Activated CD4-positive, alpha-beta T cell treated with anti-CD3 and anti-CD28 coated beads, Interleukin-2, amount 10 ng/mL, durations not matched to agents 7 days and 5 days (primary cell): ENCODE measurements at regions of chr5 and their contacts with region 1.

Region 1: DNA sequence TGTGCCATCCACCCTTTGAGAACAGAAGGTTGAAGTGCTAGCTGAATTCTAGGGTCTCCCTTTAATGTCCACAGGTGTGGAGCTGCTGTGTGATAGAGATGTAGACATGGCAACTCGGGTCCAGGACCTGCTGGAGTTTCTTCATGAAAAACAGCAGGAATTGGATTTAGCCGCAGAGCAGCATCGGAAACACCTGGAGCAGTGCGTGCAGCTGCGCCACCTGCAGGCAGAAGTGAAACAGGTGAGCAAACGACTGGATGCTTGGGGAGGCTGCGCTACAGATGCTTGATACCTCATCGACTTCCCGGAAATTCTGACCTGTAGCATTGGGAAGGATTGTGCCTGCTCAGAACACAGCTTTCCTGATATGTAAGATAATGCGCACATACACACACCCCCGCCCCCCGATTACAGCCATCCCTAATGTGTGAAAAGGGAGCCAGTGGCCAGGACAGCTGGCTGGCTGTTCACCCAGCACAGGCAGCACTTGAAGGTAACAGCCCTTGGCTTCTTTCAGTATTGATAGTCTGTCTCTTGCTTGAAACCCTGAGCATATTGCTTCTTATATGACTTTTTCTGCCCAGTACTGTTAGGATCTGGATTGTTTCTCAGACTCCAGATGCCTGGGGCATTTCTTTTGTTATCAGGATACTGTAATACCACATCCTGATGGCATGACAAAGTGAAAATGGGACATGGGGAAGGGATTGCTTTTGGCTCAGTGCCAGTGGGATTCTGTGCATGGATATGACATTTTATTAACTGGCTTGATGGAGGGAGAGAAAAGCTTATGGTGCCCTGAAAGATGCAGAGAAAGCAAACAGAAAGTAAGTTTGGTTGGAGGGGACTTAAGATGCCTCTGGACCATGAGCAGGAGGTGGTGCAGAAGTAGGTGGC is 216.8 kb upstream of the OTULINL start:
- DNase-seq: no peak
- H3K4me3 Mint-ChIP-seq: no peak overlapping the region
- H3K27ac Mint-ChIP-seq: peak overlapping the region; percentile 84
- H3K4me1 Mint-ChIP-seq: peaks cover 51% of the 10 kb centered on the region
- H3K27me3 Mint-ChIP-seq: no peaks in the 10 kb centered on the region

Region 2: GRCh38 chr5:14397717-14398116 is 32.9 kb after region 1 on chr5:
- CTCF ChIA-PET with region 1: interaction called, 4 read pairs
- POLR2A ChIA-PET with region 1: interaction called, 10 read pairs
- DNase-seq: no peak
- H3K4me3 Mint-ChIP-seq: no peak overlapping the region
- H3K27ac Mint-ChIP-seq: no peak overlapping the region
- H3K4me1 Mint-ChIP-seq: peaks cover 46% of the 10 kb centered on the region
- H3K27me3 Mint-ChIP-seq: peaks cover 5% of the 10 kb centered on the region

Region 3: DNA sequence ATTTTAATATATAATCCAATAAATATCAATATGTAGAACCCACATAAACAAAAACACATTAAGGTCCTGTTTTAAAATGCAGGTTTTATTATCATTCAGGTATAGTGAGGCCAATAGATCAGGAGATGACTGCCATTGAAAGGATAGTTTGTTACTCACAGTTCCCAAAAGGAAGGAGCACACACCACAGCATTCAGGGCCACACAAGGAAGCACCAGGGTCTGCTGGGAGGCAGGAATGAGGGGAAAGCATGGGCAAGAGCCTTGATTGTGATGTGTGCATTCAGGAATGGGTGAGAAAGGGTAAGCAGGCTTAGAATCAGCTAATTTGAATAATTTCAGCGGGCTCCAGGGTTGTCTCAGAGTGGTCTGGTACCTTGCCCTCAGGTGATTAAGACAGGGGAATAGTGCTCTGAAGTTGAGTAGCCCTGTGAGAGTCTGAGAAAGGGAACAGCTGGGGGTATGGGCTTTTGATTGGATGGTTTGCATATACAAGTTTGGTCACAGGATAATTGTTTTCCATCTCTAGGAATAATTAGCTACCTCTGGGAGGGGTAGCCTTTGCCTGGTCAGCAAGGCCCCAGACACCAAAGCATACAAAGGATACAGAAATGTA is 279.9 kb after region 1 on chr5:
- CTCF ChIA-PET with region 1: interaction called, 14 read pairs
- POLR2A ChIA-PET with region 1: no interaction called
- DNase-seq: no peak
- H3K4me3 Mint-ChIP-seq: no peak overlapping the region
- H3K27ac Mint-ChIP-seq: no peak overlapping the region
- H3K4me1 Mint-ChIP-seq: peaks cover 11% of the 10 kb centered on the region
- H3K27me3 Mint-ChIP-seq: peaks cover 25% of the 10 kb centered on the region

Region 4: GRCh38 chr5:14650052-14650451 is 285.2 kb after region 1 on chr5:
- CTCF ChIA-PET with region 1: interaction called, 14 read pairs
- POLR2A ChIA-PET with region 1: no interaction called
- DNase-seq: no peak
- H3K4me3 Mint-ChIP-seq: no peak overlapping the region
- H3K27ac Mint-ChIP-seq: no peak overlapping the region
- H3K4me1 Mint-ChIP-seq: peaks cover 17% of the 10 kb centered on the region
- H3K27me3 Mint-ChIP-seq: peaks cover 27% of the 10 kb centered on the region